ENCODE measurements at regions of chr1 and their contacts with region 1.

Region 1: DNA sequence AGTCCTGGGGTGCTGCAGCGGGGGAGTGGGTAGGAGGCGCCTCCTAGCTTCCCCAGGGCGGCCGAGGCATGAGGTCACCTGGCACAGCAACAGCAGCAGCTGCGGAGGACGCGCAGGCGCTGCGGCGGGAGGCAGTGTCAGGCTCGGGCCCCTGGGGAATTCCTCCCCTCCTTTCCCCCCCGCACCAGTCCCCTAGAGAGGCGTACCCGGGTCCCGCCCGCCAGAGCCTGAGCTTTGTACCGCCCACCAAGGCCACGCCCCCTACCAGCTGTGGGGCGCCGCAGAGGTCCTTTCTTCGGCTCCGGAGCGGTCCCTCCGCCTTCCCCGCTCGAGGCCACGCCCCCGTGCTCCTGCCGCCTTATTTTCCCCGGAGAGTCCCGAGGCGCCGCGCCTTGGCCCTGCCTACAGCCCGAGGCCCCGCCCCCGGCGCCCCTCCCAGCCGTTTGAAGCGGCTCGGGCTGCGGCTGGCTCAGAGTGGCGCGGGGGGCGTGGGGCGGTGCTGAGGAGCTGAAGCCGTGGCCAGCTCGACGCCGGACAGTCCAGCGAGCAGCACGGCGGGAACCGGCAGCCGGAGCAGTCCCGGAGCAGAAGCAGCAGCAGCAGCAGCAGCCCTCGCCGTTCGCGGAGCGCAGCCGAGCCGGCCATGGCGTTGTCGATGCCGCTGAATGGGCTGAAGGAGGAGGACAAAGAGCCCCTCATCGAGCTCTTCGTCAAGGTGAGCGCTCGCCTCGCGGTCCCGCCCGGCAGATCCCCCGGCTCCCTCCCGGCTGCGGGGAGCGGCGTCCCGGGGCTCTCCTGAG is at the start of gene CLIC4:
- DNase-seq: peak; percentile 97 to 100
- H3K4me3 ChIP-seq: peak within 1 kb of the TSS; percentile 93 to 97 (median 95)
- H3K27ac ChIP-seq: peak within 1 kb of the TSS; percentile 73
- H3K4me1 ChIP-seq: peaks cover 14 to 31% (median 18%) of the 10 kb centered on the region in 4 experiments; a peak in 6 of 7 replicates
- H3K27me3 ChIP-seq: no peaks in the 10 kb centered on the region
- CTCF ChIP-seq: peak in 2 of 3 experiments; percentile 5 to 11; a peak in 2 of 4 replicates
- EP300 ChIP-seq: no peak
- POLR2A ChIP-seq: peak; percentile 91 to 93
- RAD21 ChIP-seq: peak; percentile 12 to 39; a peak in 2 of 4 replicates
- total RNA-seq, gene CLIC4: 281 and 293 TPM in 2 replicates

Region 2: GRCh38 chr1:24415334-24415909 is 329.7 kb before region 1 on chr1 and contains the start of gene NIPAL3:
- CTCF ChIA-PET with region 1: no interaction called
- POLR2A ChIA-PET with region 1: no interaction called
- DNase-seq: peak; percentile 95 to 100
- H3K4me3 ChIP-seq: peak within 1 kb of the TSS; percentile 50 to 89 (median 76)
- H3K27ac ChIP-seq: no peak within 1 kb of the TSS
- H3K4me1 ChIP-seq: peaks cover 0 to 6% (median under 1%) of the 10 kb centered on the region in 4 experiments; a peak in 3 of 7 replicates
- H3K27me3 ChIP-seq: no peaks in the 10 kb centered on the region
- CTCF ChIP-seq: peak; percentile 83 to 93 (median 85)
- EP300 ChIP-seq: no peak
- POLR2A ChIP-seq: no peak
- RAD21 ChIP-seq: peak; percentile 67 to 71
- total RNA-seq, gene NIPAL3: 11.0 and 12.6 TPM in 2 replicates

Region 3: DNA sequence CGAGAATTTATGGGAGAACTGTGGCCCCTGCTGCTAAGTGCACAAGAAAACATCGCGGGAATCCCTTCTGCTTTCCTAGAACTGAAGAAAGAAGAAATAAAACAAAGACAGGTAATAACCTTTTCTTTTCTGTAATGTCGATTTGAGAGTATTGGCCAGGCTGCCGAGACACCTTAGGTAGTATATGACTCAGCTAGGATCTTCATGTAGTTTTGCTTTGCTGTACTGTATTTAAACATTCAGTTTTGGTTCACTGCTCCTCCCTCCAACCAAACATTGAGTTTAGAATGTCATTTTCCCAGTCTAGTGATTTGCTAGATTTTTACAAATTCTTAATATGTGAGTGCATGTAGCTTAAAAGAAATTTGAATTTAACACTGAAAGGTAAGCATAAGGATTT is 96.2 kb before region 1 on chr1:
- CTCF ChIA-PET with region 1: no interaction called
- POLR2A ChIA-PET with region 1: no interaction called
- DNase-seq: no peak
- H3K4me3 ChIP-seq: no peak overlapping the region
- H3K27ac ChIP-seq: no peak overlapping the region
- H3K4me1 ChIP-seq: peaks cover 0 to 3% (median 0%) of the 10 kb centered on the region in 4 experiments; a peak in 2 of 7 replicates
- H3K27me3 ChIP-seq: no peaks in the 10 kb centered on the region
- CTCF ChIP-seq: no peak
- EP300 ChIP-seq: no peak
- POLR2A ChIP-seq: no peak
- RAD21 ChIP-seq: no peak

Region 4: DNA sequence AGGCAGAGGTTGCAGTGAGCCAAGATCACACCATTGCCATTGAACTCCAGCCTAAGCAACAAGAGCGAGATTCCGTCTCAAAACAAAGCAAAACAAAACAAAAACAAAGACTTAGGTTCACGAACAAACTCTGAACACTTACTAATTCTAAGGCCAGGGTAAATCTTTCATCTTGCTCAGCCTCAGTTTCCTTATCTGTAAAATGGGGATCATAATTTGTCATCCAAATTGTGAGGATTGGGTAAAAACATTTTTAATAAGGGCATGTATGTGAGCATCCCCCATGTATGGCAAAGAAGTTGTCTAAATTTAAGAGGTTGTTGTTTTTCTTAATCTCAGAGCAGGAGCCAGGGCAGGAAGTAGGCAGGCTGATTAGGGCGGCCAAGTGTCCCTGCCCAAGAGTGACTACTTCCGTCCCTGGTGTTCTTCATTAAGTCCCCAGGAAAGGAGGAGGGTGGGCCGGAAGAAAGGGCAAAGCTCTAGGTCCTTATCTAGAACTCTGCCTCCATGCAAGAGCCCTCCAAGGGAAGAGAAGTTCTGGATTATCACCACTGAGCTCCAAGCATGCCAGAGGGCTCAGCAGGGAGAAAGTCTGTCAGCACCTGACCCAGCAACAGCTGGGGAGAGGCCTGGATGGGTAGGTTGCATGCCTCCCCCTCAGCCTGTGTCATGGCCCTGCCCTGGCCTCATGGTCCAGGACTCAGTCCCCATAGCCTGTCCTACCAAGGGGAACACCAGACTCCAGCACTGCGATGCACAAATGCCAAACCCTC is 49.7 kb before region 1 on chr1:
- CTCF ChIA-PET with region 1: interaction called, 13 read pairs
- POLR2A ChIA-PET with region 1: interaction called, 17 read pairs
- DNase-seq: no peak
- H3K4me3 ChIP-seq: no peak overlapping the region
- H3K27ac ChIP-seq: no peak overlapping the region
- H3K4me1 ChIP-seq: peaks cover 0 to 6% (median 3%) of the 10 kb centered on the region in 4 experiments; a peak in 4 of 7 replicates
- H3K27me3 ChIP-seq: no peaks in the 10 kb centered on the region
- CTCF ChIP-seq: no peak
- EP300 ChIP-seq: no peak
- POLR2A ChIP-seq: no peak
- RAD21 ChIP-seq: no peak

Region 5: DNA sequence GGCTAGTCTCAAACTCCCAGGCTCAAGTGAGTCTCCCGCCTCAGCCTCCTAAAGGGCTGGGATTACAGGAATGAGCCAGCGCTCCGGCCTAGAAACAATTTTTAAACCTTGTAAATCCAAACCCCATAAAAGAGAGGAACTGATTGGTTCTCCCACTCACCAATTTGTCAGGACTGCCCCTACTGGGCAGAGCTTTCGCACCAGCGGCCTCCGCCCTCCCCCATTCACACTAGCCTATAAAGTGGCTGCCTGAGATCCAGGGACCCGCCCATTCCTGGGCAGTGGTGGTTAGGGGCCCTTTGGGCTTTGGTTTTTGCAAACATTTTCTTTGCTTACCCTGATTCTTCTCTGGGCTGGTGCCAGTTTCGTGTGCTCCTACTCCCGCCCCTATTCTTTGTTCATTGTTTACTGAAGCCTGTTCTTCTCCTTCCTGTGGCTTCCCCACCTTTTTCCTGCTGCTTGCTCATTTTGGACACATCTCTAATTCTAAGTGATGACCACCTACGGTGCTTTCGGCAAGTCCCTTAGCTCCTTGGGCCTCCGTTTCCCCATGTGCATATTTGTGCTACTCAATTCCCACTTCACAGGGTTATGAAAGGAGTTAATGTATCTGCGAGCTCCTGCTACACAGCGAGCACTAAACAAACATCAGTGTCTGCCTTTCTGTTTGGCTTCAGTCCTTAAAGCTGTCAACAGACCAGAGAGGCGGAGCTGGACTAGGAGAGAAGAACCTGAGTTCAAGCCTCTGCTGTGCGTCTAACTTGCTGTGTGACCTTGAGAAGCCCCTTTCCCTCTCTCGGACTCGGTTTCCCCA is 39.6 kb before region 1 on chr1:
- CTCF ChIA-PET with region 1: interaction called, 3 read pairs
- POLR2A ChIA-PET with region 1: interaction called, 16 read pairs
- DNase-seq: peak; percentile 61 to 82
- H3K4me3 ChIP-seq: no peak overlapping the region
- H3K27ac ChIP-seq: no peak overlapping the region
- H3K4me1 ChIP-seq: peaks cover 6 to 12% (median 9%) of the 10 kb centered on the region in 4 experiments; a peak in 5 of 7 replicates
- H3K27me3 ChIP-seq: no peaks in the 10 kb centered on the region
- CTCF ChIP-seq: no peak
- EP300 ChIP-seq: no peak
- POLR2A ChIP-seq: 0 out of 3 replicates have a peak, but pooled peaks of 1 of the 2 experiments have one; percentile 19
- RAD21 ChIP-seq: no peak

Region 6: DNA sequence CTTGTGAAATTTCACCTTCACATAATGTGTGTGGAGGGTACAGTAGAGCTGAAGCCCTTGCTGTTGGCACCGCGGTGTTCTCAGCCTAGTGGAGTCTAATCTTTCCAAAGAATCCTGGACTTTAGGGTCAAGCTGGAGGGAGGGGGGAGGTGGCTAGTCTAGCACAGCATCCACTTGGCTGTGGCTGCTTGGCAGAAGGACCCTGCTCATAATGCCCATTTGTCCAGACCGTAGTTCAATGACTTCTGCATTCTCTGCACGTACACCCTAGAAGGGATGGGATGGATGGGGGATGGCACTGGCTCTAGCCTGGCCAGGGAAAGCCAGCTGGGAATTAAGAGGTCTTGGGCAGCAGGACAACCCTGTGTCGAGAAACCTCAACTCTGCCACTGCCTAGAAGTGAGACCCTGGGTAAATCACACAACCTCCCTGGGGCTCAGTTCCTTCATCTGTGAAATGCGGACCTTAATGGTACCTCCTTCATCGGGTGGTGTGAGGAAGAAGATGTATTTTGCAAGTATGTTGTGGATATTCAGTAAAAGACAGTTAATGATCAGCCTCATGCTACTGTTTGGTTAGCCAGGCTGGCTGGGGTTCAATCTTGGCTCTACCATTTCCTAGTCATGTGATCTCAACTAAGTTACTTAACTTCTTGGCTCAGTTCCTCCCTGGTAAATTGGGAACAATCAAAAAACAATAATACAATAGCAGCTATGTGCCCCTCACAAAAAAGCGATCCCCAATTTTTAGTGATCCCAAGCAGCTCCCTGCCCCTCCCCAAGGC is 27.1 kb before region 1 on chr1:
- CTCF ChIA-PET with region 1: interaction called, 5 read pairs
- POLR2A ChIA-PET with region 1: interaction called, 29 read pairs
- DNase-seq: no peak
- H3K4me3 ChIP-seq: no peak overlapping the region
- H3K27ac ChIP-seq: no peak overlapping the region
- H3K4me1 ChIP-seq: no peaks in the 10 kb centered on the region; a peak in 1 of 7 replicates
- H3K27me3 ChIP-seq: no peaks in the 10 kb centered on the region
- CTCF ChIP-seq: no peak
- EP300 ChIP-seq: no peak
- POLR2A ChIP-seq: no peak
- RAD21 ChIP-seq: no peak

Region 7: DNA sequence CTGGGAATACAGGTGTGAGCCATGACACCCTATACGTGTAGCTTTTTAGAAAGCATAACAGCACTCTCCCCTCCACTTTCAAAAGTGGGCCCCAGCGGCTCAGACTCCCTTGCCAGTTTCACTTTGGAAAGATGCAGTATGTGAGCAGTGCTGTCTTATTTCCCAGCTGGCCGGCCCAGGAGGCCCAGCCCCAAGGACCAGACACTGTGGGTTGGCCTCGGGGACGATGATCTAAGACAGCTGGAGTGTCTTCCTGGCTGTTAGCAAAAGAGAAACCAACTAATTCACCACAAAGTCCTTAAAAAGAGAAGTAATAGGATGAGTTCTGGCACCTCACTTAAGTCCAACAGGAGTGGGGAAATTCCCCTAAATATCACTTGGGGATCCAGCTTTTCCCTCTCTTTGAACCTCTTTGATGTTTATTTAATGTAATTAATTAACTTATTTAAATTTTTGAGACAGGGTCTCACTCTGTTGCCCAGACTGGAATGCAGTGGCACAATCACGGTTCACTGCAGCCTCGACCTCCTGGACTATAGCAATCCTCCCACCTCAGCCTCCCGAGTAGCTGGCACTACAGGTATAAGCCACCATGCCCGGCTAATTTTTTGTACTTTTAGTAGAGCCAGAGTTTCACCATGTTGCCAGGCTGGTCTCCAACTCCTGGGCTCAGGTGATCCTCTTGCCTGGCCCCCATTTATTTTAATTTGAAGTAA is 17.5 kb before region 1 on chr1:
- CTCF ChIA-PET with region 1: interaction called, 8 read pairs
- POLR2A ChIA-PET with region 1: interaction called, 29 read pairs
- DNase-seq: no peak
- H3K4me3 ChIP-seq: no peak overlapping the region
- H3K27ac ChIP-seq: no peak overlapping the region
- H3K4me1 ChIP-seq: peaks cover 0 to 29% (median 15%) of the 10 kb centered on the region in 4 experiments; a peak in 6 of 7 replicates
- H3K27me3 ChIP-seq: no peaks in the 10 kb centered on the region
- CTCF ChIP-seq: no peak
- EP300 ChIP-seq: no peak
- POLR2A ChIP-seq: no peak
- RAD21 ChIP-seq: no peak

Region 8: GRCh38 chr1:24765308-24765988 is 20.3 kb after region 1 on chr1:
- CTCF ChIA-PET with region 1: interaction called, 3 read pairs
- POLR2A ChIA-PET with region 1: interaction called, 37 read pairs
- DNase-seq: peak in 1 of 2 experiments; percentile 23
- H3K4me3 ChIP-seq: no peak overlapping the region
- H3K27ac ChIP-seq: no peak overlapping the region
- H3K4me1 ChIP-seq: peaks cover 0 to 7% (median under 1%) of the 10 kb centered on the region in 4 experiments; a peak in 4 of 7 replicates
- H3K27me3 ChIP-seq: no peaks in the 10 kb centered on the region
- CTCF ChIP-seq: no peak
- EP300 ChIP-seq: no peak
- POLR2A ChIP-seq: no peak
- RAD21 ChIP-seq: no peak

Region 9: DNA sequence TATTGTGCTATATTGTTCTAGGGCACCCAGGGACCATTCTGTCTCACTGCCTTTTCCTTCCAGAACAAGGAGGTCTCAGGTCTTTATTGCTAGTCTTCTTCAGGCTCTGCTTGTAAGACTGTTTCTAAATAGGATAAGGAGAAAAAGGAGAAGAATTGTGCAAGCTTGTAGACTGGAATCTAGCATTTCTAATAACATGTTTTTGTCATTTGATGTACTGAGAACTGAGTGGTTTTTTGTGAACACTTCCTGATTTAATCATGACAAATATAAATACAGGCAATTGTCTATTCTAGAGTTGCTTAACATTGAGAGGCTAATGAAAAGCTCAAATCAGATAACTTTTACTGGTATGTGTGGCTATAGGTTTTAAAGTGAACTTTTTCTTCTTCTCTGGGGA is 77.8 kb after region 1 on chr1:
- CTCF ChIA-PET with region 1: no interaction called
- POLR2A ChIA-PET with region 1: interaction called, 10 read pairs
- DNase-seq: no peak
- H3K4me3 ChIP-seq: no peak overlapping the region
- H3K27ac ChIP-seq: no peak overlapping the region
- H3K4me1 ChIP-seq: no peaks in the 10 kb centered on the region; a peak in 1 of 7 replicates
- H3K27me3 ChIP-seq: no peaks in the 10 kb centered on the region
- CTCF ChIP-seq: no peak
- EP300 ChIP-seq: no peak
- POLR2A ChIP-seq: no peak
- RAD21 ChIP-seq: no peak